ENCODE measurements at regions of chr5 and their contacts with region 1.

Region 1: GRCh38 chr5:139560752-139561654 is at the start of gene UBE2D2:
- DNase-seq: peak; percentile 98
- H3K4me3 Mint-ChIP-seq: peak within 1 kb of the TSS; percentile 94
- H3K27ac Mint-ChIP-seq: peak within 1 kb of the TSS; percentile 96
- H3K4me1 Mint-ChIP-seq: peaks cover 33% of the 10 kb centered on the region
- H3K27me3 Mint-ChIP-seq: no peaks in the 10 kb centered on the region
- total RNA-seq, gene UBE2D2: 221 to 243 TPM

Region 2: DNA sequence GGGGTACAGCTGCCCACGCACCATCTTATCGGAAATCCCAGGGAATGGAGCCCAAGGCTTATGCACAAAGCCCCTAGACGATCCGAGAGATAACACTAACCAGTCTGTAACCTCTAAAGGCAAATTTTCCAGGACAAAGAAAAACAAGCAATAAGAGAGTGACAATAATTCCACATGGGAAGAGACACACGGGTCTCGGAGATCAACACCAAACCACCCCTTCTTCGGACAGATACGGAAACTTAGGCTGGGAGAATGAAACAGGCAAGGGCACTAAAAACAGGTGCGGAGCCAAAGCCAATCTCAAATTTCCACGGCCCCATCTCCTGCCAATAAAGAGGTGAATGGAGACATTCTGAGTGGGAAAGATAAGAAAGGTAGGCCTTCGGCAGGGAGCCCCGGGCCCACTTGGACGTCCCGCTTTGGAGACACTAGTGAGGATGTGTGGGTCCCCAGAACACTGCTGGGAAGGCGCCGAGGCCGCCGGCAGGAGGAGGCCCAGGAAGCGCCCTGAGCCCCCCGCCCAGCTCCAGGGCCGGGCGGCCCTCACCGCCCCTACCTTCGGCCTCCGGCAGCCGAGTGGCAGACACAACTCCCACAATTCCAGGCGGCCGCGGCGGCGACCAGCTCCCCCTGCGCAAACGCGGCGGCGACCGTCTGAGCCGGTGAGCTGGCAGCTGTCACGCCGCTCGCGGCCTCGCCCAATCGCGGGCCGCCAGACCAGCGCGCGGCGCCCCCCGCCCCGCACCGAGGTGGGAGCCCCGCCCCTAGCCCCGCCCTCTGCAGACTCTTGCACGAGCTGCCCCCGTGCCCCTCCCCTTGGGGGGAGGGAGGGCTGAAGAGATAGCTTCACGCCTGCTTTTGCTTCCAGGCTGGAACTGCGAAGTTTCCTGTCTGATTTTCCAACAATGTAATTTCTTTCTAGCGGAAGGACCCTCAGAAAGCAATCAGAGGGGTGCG is 363.0 kb before region 1 on chr5 and contains the start of gene SIL1:
- CTCF ChIA-PET with region 1: no interaction called
- intact Hi-C with region 1: loop called (anchors 2 kb)
- DNase-seq: peak; percentile 97
- H3K4me3 Mint-ChIP-seq: peak within 1 kb of the TSS; percentile 89
- H3K27ac Mint-ChIP-seq: peak within 1 kb of the TSS; percentile 82
- H3K4me1 Mint-ChIP-seq: peaks cover 27% of the 10 kb centered on the region
- H3K27me3 Mint-ChIP-seq: no peaks in the 10 kb centered on the region
- total RNA-seq, gene SIL1: 21.4 to 29.6 TPM

Region 3: GRCh38 chr5:139341650-139342422 is 219.2 kb before region 1 on chr5 and contains the start of gene PAIP2:
- CTCF ChIA-PET with region 1: interaction called, 4 read pairs
- intact Hi-C with region 1: loop called (anchors 1 kb)
- DNase-seq: peak; percentile 99
- H3K4me3 Mint-ChIP-seq: peak within 1 kb of the TSS; percentile 100
- H3K27ac Mint-ChIP-seq: peak within 1 kb of the TSS; percentile 99
- H3K4me1 Mint-ChIP-seq: peaks cover 48% of the 10 kb centered on the region
- H3K27me3 Mint-ChIP-seq: no peaks in the 10 kb centered on the region
- total RNA-seq, gene PAIP2: 68.8 to 74.3 TPM

Region 4: GRCh38 chr5:139417214-139417613 is 143.8 kb before region 1 on chr5:
- CTCF ChIA-PET with region 1: interaction called, 5 read pairs
- intact Hi-C with region 1: loop called (anchors 1 kb)
- DNase-seq: no peak
- H3K4me3 Mint-ChIP-seq: no peak overlapping the region
- H3K27ac Mint-ChIP-seq: no peak overlapping the region
- H3K4me1 Mint-ChIP-seq: peaks cover 50% of the 10 kb centered on the region
- H3K27me3 Mint-ChIP-seq: no peaks in the 10 kb centered on the region

Region 5: DNA sequence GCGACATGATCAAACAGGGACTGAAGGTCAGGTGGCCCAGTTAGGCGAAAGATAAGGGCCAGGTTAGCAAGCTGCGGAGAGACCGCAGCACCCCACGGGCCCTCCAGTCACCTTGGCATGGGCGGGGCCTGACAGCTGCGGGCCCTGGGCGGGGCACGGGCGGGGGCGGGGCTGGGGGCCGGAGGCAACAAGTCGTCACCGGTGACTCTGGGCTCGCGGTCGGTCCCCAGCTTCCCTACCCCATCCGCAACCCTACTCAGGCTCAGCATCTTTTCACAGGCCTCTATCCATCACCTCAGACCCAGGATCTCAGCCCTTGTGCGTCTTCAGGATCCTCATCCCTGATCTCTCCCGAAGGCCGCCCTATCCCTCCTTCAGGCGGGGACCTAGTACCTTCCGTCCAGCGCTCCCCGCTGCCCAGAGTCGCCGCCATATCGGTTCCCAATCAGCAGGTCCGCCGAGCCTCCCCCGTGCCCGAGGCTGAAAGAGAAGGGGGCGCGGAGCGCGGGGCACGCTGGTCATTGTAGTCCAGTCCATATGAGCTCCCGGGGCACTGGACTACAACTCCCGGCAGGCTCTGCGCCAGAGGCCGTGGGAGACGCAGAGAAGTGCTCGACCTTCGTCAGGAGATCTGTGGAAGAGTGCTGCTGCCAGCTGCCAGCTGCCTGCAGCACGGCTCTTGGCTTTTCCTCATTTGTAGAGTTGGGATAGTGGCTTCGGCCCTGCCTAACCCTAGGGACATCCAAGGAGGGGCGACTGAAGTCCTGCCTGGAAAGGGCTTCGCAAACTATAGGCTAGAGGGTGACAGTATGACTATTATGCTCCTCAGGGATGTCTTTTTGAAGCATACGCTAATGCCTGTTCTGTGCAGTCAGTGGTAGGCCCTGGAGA is 121.7 kb before region 1 on chr5 and contains the start of gene DNAJC18:
- CTCF ChIA-PET with region 1: no interaction called
- intact Hi-C with region 1: loop called (anchors 2 kb)
- DNase-seq: peak; percentile 94
- H3K4me3 Mint-ChIP-seq: peak within 1 kb of the TSS; percentile 95
- H3K27ac Mint-ChIP-seq: peak within 1 kb of the TSS; percentile 98
- H3K4me1 Mint-ChIP-seq: peaks cover 42% of the 10 kb centered on the region
- H3K27me3 Mint-ChIP-seq: no peaks in the 10 kb centered on the region
- total RNA-seq, gene DNAJC18: 18.1 to 18.8 TPM

Region 6: DNA sequence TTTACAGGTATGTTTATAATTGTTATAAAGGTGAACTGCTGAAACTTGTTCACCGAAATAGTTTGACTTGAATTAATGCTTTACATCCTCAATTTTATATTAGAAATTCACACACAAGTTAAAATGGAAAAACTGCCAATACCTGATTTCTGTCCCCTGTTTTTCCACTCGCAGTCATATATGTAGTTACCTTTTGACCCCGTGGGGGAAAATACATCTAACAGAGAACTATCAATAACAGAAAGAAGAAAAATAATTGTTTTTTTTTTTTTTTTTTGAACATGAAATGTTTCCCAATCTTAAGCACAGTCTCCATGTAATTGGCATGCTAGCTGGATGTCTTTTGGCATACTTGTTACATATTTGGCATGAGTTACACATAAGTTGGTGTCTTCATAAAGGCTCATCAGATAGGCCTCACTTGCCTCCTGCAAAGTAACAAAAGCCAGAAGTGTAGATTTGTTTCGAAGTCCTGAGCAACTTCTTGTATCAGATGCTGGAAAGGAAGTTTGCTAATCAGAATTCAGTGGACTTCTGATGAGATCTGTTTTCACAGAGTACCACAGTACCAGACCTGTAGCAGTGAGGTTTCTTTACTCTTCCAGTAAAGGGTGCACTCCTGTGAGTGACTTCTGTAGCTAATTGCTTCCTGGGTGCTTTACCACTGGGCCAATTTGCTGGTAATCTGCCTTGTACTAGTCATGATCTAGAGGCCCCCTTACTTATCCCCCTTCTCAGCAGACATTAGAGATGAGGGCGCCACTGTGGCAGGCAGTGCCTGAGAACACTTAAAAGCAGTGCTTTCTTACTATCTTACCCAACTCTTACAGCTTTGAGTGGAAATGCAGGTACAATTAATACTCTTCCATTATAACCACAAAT is 50.9 kb after region 1 on chr5:
- CTCF ChIA-PET with region 1: interaction called, 3 read pairs
- intact Hi-C with region 1: loop called (anchors 5 kb)
- DNase-seq: peak; percentile 64
- H3K4me3 Mint-ChIP-seq: no peak overlapping the region
- H3K27ac Mint-ChIP-seq: peak overlapping the region; percentile 81
- H3K4me1 Mint-ChIP-seq: peaks cover 36% of the 10 kb centered on the region
- H3K27me3 Mint-ChIP-seq: no peaks in the 10 kb centered on the region

Region 7: DNA sequence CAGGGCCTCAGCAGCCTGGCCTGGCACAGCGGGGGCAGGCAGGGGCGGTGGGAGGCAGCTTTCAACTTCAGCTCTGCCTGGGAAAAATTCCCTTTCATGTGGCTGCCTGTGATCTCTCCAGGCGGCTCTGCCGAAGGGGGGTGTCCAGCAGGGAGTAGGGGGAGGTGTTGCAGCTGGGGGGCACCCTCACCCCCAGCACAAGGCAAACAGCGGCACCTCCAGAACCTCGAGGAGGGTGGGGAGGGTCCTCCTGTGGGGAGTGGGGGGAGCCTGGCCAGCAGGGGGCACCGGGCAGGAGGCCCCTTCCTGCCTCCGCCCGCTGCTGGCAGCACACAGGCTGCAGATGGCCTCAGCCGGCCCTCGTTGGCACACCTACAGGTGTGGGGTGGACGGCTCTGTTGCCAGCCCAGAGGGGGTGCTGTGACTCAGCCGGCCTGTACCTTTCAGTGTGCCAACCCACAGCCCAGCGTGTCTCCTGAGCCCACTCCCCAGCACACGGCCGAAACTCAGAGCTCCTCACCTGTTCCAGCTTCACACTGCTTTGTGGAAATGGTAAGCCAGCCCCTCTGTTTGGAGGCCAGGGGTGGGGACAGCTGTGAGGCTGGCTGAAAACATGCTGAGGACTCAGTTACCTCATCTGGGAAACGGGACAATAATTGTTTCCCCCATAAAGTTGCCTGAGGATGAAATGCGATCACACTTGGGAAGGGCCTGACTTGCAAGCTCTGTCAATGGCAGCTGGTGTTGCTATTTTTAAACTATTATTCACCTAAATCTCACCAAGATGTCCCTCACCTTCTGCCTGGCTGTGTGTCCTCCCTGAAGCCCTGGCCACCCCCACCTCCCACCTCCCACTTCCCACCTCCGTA is 124.1 kb after region 1 on chr5:
- CTCF ChIA-PET with region 1: no interaction called
- intact Hi-C with region 1: no loop called
- DNase-seq: no peak
- H3K4me3 Mint-ChIP-seq: no peak overlapping the region
- H3K27ac Mint-ChIP-seq: no peak overlapping the region
- H3K4me1 Mint-ChIP-seq: peaks cover 6% of the 10 kb centered on the region
- H3K27me3 Mint-ChIP-seq: no peaks in the 10 kb centered on the region

Region 8: GRCh38 chr5:140107312-140108083 is 546.5 kb after region 1 on chr5:
- CTCF ChIA-PET with region 1: interaction called, 3 read pairs
- intact Hi-C with region 1: loop called (anchors 5 kb)
- DNase-seq: peak; percentile 91
- H3K4me3 Mint-ChIP-seq: peak overlapping the region; percentile 98
- H3K27ac Mint-ChIP-seq: peak overlapping the region; percentile 91
- H3K4me1 Mint-ChIP-seq: peaks cover 39% of the 10 kb centered on the region
- H3K27me3 Mint-ChIP-seq: no peaks in the 10 kb centered on the region

Measured in activated naive CD4-positive, alpha-beta T cell treated with anti-CD3 and anti-CD28 coated beads for 36 hours (primary cell).